ENCODE measurements at regions of chr10 and their contacts with region 1.

Region 1: DNA sequence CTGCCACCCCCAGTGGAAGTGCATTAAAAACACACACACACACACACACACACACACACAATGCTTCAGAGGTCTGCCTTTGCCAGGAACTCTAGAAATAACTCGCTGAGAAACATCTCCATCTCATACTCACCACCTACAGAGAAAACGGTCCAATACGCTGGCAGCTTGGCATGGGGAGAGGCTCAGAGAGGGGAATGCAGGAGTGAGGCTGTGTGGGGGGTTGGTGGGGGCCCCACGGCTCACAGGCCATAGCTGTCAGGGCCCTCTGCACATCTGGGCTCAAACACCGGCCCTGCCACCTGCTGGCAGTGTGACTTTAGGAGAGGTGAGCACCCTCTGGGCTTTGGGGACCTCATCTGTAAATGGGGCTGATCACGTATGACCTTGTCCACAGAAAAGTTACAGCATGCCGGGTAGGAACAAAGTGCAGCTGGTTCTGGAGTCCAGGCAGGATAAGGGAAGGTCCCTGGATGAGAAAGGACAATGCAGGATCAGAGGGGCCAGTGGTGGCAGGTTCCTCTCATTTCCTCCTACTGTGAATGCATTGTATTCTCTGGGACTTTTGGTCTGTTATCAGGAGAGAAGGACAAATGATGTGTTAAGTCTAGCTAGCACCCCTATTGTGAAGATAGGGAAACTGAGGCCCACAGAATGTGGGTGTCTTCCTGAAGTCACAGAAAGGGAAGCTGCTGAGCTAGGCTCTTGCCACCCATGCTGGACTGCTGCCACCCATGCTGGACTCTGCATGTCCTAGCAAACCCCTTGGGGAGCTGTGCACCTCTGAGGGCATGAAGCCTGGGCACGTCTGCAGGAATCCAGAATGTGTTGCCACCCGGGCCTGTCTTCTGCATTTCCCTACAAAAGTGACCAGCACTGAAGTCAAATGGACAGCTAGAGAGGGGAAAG is 404.6 kb downstream of the RPS24 start:
- DNase-seq: no peak
- H3K4me3 ChIP-seq: no peak overlapping the region
- H3K27ac ChIP-seq: no peak overlapping the region
- H3K4me1 ChIP-seq: no peaks in the 10 kb centered on the region; a peak in 1 of 7 replicates
- H3K27me3 ChIP-seq: no peaks in the 10 kb centered on the region
- CTCF ChIP-seq: 0 out of 4 replicates have a peak, but pooled peaks of 1 of the 3 experiments have one; percentile 11
- EP300 ChIP-seq: no peak
- POLR2A ChIP-seq: no peak
- RAD21 ChIP-seq: peak; percentile 4 to 19; a peak in 1 of 4 replicates

Region 2: DNA sequence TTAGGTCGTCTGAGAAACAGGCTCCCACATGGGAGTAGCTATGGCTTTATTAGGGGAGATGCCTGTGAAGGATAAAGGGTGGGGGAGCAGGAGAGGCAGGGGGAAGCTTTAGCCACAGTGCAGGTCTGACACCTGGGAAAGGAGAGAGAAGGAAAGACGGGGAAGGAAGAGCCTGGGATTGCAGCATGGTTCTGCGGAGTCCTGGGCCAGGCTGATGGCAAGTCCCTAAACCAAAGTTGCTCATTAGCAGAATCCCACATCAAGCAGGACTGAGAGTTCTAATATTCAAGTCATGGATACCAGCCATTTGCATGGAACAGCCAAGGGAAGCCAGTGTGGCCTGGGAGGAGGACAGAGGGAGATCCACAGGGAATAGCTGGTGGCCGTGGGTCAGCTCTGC is 10.2 kb after region 1 on chr10:
- CTCF ChIA-PET with region 1: interaction called, 10 read pairs
- POLR2A ChIA-PET with region 1: no interaction called
- DNase-seq: no peak
- H3K4me3 ChIP-seq: no peak overlapping the region
- H3K27ac ChIP-seq: no peak overlapping the region
- H3K4me1 ChIP-seq: no peaks in the 10 kb centered on the region; a peak in 1 of 7 replicates
- H3K27me3 ChIP-seq: no peaks in the 10 kb centered on the region
- CTCF ChIP-seq: no peak
- EP300 ChIP-seq: no peak
- POLR2A ChIP-seq: no peak
- RAD21 ChIP-seq: no peak

Measured in H1 (cell line).